ENCODE measurements at regions of chr11 and their contacts with region 1.

Region 1: GRCh38 chr11:71342951-71343827 is 90.8 kb upstream of the SHANK2 start:
- DNase-seq: peak; percentile 42 to 48
- H3K4me3 ChIP-seq: no peak overlapping the region
- H3K27ac ChIP-seq: no peak overlapping the region
- H3K4me1 ChIP-seq: peaks cover 4 to 5% of the 10 kb centered on the region in 2 donors
- H3K27me3 ChIP-seq: no peaks in the 10 kb centered on the region
- CTCF ChIP-seq: peak in 4 of 6 experiments; percentile 35 to 69 (median 62)
- POLR2A ChIP-seq: no peak

Region 2: GRCh38 chr11:71114124-71114851 is 228.9 kb before region 1 on chr11:
- intact Hi-C with region 1: loop called (anchors 10 kb)
- DNase-seq: no peak
- H3K4me3 ChIP-seq: no peak overlapping the region
- H3K27ac ChIP-seq: peak overlapping the region in 2 of 3 donors; percentile 48 to 83
- H3K4me1 ChIP-seq: peaks cover 25 to 26% of the 10 kb centered on the region in 2 donors
- H3K27me3 ChIP-seq: no peaks in the 10 kb centered on the region
- CTCF ChIP-seq: no peak
- POLR2A ChIP-seq: no peak

Region 3: DNA sequence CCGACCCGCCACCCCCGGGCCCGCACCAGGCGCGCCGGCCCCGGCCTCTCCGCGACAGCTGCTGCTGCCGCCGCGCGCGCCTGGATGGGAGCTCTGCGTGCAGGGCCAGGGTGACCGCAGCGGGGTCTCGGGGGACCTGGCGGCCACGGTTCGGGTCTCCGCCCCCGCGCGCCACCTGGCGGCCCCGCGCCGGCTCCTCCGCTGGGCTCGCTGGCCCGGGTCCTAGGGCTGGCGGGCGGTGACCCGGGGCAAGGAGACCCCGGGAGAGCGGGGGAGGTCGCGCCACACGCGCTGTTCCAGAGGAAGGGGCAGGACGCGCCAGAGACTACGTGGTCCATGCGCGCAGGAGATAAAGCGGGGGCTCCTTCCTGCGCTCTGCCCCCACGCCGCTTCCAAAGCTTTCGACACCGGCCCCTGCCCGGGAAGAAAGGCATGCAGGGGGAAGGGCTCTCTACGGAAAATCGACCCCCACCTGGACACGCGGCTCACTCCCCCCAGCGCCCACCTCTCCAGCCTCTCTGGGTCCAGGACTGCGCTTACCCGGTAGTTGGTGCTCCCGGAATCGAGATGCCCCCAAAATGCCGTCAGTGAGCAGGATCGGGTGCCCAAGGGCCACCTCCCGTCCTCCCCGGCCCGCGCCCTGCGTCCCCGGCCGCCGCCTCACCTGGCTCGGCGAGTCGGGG is 91.3 kb before region 1 on chr11:
- intact Hi-C with region 1: no loop called
- DNase-seq: peak; percentile 67 to 69
- H3K4me3 ChIP-seq: peak overlapping the region; percentile 18 to 79 (median 56)
- H3K27ac ChIP-seq: peak overlapping the region; percentile 84 to 90 (median 85)
- H3K4me1 ChIP-seq: peaks cover 48 to 56% of the 10 kb centered on the region in 2 donors
- H3K27me3 ChIP-seq: no peaks in the 10 kb centered on the region
- CTCF ChIP-seq: peak; percentile 20 to 76 (median 58)
- POLR2A ChIP-seq: peak in 1 of 2 donors; percentile 35

Measured in thyroid gland (tissue), 4 donors.